ENCODE measurements at regions of chr13 and their contacts with region 1.

Region 1: GRCh38 chr13:35157143-35157755 is 215.2 kb downstream of the NBEA start:
- DNase-seq: peak in 1 of 5 donors; percentile 41
- H3K4me3 ChIP-seq: no peak overlapping the region
- H3K27ac ChIP-seq: no peak overlapping the region
- H3K4me1 ChIP-seq: no peaks in the 10 kb centered on the region
- H3K27me3 ChIP-seq: no peaks in the 10 kb centered on the region
- CTCF ChIP-seq: peak; percentile 46 to 56 (median 50)
- EP300 ChIP-seq: no peak
- POLR2A ChIP-seq: no peak

Region 2: GRCh38 chr13:33931397-33932311 is 1225.6 kb before region 1 on chr13:
- intact Hi-C with region 1: loop called in 1 of 4 experiments (anchors 10 kb)
- DNase-seq: no peak
- H3K4me3 ChIP-seq: no peak overlapping the region
- H3K27ac ChIP-seq: no peak overlapping the region
- H3K4me1 ChIP-seq: peaks cover 5% of the 10 kb centered on the region
- H3K27me3 ChIP-seq: no peaks in the 10 kb centered on the region
- CTCF ChIP-seq: peak in 1 of 3 donors; percentile 39
- EP300 ChIP-seq: no peak
- POLR2A ChIP-seq: no peak

Region 3: DNA sequence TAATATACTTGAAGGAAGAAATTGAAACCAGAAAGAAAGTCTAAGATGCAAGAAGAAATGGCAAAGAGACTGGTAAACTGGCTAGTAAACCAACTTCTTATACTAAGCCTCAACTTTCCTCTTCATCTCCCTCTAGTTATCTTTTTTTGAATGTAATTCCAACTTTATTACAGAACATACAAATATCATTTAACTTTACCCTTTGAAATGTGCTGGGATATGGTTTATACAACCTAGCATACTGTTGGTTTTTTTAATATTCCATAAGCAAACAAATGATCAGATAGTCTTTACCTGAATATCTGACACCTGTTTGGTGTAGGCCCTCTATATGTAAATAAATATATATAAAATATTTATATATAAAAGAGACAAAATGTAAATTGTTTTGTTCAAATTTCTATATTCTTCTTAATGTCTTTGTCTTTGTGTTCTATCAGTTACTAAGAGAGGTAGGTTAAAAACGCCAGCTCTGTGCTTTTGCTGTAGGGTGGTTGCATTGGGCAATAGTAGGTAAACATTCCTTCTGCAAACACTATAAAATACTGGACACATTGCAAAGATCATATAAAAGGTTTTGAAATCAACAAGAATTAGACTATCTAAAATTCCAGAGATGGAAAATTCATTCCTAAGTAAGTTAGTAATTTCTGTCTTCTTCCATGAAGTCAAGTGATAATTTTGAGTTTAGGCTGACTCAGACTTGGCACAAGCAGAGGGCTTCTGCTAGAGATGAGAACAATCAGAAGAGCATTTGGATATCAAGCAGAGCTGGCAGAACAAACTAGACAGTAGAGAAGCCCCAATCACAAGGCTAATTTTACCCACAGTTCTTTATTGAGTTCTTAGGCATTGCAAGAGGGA is 956.0 kb before region 1 on chr13:
- intact Hi-C with region 1: loop called in 1 of 4 experiments (anchors 5 kb)
- DNase-seq: no peak
- H3K4me3 ChIP-seq: no peak overlapping the region
- H3K27ac ChIP-seq: no peak overlapping the region
- H3K4me1 ChIP-seq: no peaks in the 10 kb centered on the region
- H3K27me3 ChIP-seq: no peaks in the 10 kb centered on the region
- CTCF ChIP-seq: no peak
- EP300 ChIP-seq: no peak
- POLR2A ChIP-seq: no peak

Region 4: DNA sequence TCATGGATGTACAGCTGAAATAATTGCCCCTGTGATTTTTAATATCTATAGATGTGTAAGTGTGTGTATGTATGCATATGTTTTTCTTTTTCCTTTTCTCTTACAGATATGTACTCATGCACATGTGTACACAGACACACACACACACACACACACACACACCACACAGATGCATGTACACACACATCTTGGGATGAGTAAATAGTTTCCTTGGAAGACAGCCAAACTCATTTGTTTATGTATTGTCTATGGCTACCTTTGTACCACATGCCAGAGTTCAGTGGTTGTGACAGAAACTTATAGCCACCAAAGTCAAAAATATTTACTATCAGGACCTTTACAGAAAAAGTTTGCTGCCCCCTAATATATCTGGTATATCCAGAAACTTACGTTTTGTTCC is 126.6 kb after region 1 on chr13:
- intact Hi-C with region 1: no loop called
- DNase-seq: no peak
- H3K4me3 ChIP-seq: no peak overlapping the region
- H3K27ac ChIP-seq: no peak overlapping the region
- H3K4me1 ChIP-seq: no peaks in the 10 kb centered on the region
- H3K27me3 ChIP-seq: peaks cover 2% of the 10 kb centered on the region
- CTCF ChIP-seq: no peak
- EP300 ChIP-seq: no peak
- POLR2A ChIP-seq: no peak

Measured in ovary (tissue), 10 donors.